ENCODE measurements at regions of chr16 and their contacts with region 1.

Region 1: DNA sequence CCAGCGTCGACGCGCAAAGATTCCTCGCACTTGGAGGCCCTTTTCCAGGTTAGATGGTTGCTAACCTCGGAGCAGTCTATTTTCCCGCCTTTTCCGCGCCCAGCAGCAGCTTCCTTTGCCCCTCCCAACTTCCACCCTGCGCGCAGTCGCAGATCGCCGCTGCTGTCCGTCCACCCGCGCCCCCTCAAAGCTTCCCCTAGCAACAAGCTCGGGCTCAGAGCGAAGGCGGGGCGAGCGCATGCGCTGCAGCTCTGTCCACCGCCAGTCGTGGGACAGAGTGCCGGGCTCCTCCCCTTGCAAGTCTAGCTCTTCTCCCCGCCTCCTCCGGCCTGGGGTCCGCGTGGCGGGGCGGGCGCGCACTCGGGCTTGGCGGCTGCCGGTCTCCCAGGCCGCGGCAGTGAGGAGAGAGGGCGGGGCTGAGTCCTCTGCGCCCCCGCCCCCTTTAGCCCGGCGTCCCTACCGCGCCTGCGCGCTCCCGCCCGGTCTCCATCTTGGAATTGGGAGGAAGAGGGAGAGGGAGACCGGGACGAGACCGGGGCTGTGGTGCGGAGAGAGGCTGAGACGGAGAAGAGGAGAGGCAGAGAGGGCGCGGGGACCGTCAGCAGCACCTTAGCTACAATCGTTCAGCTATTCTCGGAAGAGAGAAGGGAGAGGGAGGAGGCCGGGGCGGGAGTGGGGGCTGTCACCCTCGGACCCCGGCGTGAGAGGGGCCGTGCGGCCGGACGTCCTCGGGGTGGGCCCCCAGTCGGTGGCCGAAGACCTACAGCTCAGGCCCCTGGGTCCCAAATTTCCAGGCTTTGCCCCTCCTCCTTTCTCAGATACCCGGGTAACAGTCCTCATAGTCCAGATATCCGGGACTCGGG is at the start of gene TAOK2:
- DNase-seq: peak; percentile 100
- H3K4me3 ChIP-seq: peak within 1 kb of the TSS; percentile 79 to 95 (median 94)
- H3K27ac ChIP-seq: peak within 1 kb of the TSS; percentile 81
- H3K4me1 ChIP-seq: peaks cover 38% of the 10 kb centered on the region
- H3K27me3 ChIP-seq: no peaks in the 10 kb centered on the region
- CTCF ChIP-seq: no peak
- POLR2A ChIP-seq: peak; percentile 89
- total RNA-seq, gene TAOK2: 112 and 114 TPM in 2 replicates

Region 2: DNA sequence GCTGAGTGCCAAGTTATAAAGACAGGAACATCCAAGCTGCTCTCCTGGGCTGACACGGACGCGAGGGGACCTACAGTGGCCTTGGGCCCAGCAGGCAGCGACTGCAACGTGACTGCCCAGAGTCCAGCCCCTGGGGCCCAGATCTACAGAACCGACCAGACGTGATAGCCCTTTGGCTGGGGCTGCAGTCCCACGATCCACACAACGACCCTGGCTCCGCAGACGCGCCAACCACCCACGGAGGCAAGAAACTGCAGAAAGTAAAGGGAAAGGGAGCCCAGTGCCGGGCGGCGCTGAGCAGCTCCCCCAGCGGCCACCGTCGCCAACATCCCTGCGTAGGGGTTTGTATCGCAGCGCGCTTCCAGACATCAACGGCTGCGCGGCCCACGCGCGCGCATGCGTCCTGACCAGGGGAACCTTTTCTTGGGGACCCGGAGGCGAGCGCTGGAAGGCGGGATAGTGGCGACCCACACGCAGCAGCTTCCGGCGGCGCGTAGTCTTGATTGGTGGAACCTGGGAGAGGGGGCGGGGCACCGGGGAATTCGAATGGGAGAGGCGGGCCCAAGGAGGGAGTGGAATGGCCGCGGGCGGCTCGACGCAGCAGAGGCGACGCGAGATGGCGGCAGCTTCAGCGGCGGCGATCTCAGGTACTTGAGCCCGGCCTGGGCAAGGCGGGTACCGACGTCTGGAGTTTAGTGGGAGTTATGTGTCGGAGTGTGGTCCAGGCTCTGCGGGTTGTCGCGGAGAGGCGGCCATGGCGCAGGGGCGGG is 183.2 kb before region 1 on chr16 and contains the start of gene KIF22:
- CTCF ChIA-PET with region 1: no interaction called
- POLR2A ChIA-PET with region 1: interaction called, 3 read pairs
- dilution Hi-C with region 1: no loop called
- intact Hi-C with region 1: loop called (anchors 5 kb)
- DNase-seq: peak; percentile 99
- H3K4me3 ChIP-seq: peak within 1 kb of the TSS; percentile 80 to 93 (median 88)
- H3K27ac ChIP-seq: peak within 1 kb of the TSS; percentile 13
- H3K4me1 ChIP-seq: peaks cover 23% of the 10 kb centered on the region
- H3K27me3 ChIP-seq: no peaks in the 10 kb centered on the region
- CTCF ChIP-seq: peak; percentile 85 to 90
- POLR2A ChIP-seq: peak; percentile 70
- total RNA-seq, gene KIF22: 82.3 and 90.0 TPM in 2 replicates

Region 3: DNA sequence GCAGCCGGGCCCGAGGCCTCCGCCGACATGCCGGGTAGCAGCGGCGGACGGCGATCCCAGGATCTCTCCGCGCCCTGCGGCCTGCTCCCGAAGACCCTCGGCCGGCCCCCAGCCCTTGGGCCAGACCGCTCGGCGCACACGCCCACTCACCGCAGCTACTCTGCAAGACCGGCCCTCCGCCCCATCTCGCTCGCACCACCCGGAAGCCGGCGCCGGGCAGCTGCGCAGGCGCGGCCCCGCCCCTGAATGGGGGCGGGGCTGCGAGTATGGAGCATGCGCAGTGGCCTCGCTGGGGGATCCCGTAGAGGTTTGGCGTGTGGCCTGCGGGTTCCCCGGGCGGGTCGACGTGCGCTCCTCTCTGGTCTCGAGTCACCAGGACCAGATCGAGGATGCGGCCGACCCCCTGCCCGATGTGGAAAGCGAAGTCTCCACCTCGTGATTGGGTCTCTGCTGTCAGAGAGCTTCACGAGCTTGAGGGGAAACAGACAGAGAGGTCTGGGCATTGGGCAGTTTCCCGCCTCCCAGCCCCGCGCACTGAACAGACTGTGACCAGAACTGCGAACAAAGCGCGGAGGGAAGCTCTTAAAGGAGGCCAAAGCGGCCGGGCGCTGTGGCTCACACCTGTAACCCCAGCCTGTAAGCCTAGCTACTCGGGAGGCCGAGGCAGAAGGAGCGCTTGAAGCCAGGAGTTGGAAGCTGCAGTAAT is 47.5 kb before region 1 on chr16 and contains the start of gene KCTD13:
- CTCF ChIA-PET with region 1: interaction called, 7 read pairs
- POLR2A ChIA-PET with region 1: interaction called, 5 read pairs
- dilution Hi-C with region 1: no loop called
- intact Hi-C with region 1: loop called (anchors 1 kb)
- DNase-seq: peak; percentile 91
- H3K4me3 ChIP-seq: peak within 1 kb of the TSS; percentile 61 to 78 (median 73)
- H3K27ac ChIP-seq: peak within 1 kb of the TSS; percentile 19
- H3K4me1 ChIP-seq: peaks cover 15% of the 10 kb centered on the region
- H3K27me3 ChIP-seq: no peaks in the 10 kb centered on the region
- CTCF ChIP-seq: no peak
- POLR2A ChIP-seq: peak; percentile 93
- total RNA-seq, gene KCTD13: 21.0 and 24.2 TPM in 2 replicates

Region 4: GRCh38 chr16:29961479-29962343 is 11.9 kb before region 1 on chr16 and contains the start of gene TMEM219:
- CTCF ChIA-PET with region 1: interaction called, 14 read pairs
- POLR2A ChIA-PET with region 1: interaction called, 14 read pairs
- dilution Hi-C with region 1: no loop called
- intact Hi-C with region 1: loop called (anchors 1 kb)
- DNase-seq: peak; percentile 92
- H3K4me3 ChIP-seq: peak within 1 kb of the TSS; percentile 63 to 82 (median 76)
- H3K27ac ChIP-seq: peak within 1 kb of the TSS; percentile 70
- H3K4me1 ChIP-seq: peaks cover 15% of the 10 kb centered on the region
- H3K27me3 ChIP-seq: no peaks in the 10 kb centered on the region
- CTCF ChIP-seq: peak; percentile 27 to 43
- POLR2A ChIP-seq: no peak
- total RNA-seq, gene TMEM219: 99.4 and 110 TPM in 2 replicates

Region 5: GRCh38 chr16:29995911-29996772 is 22.5 kb after region 1 on chr16 and contains the start of gene INO80E:
- CTCF ChIA-PET with region 1: interaction called, 4 read pairs
- POLR2A ChIA-PET with region 1: interaction called, 3 read pairs
- dilution Hi-C with region 1: no loop called
- intact Hi-C with region 1: loop called (anchors 1 kb)
- DNase-seq: peak; percentile 95
- H3K4me3 ChIP-seq: peak within 1 kb of the TSS; percentile 70 to 81 (median 73)
- H3K27ac ChIP-seq: peak within 1 kb of the TSS; percentile 76
- H3K4me1 ChIP-seq: peaks cover 22% of the 10 kb centered on the region
- H3K27me3 ChIP-seq: no peaks in the 10 kb centered on the region
- CTCF ChIP-seq: no peak
- POLR2A ChIP-seq: no peak
- total RNA-seq, gene INO80E: 76.4 and 84.1 TPM in 2 replicates

Measured in endothelial cell of umbilical vein (primary cell).